AG04450 (cell line): ENCODE measurements at regions of chr16 and their contacts with region 1.

Region 1: DNA sequence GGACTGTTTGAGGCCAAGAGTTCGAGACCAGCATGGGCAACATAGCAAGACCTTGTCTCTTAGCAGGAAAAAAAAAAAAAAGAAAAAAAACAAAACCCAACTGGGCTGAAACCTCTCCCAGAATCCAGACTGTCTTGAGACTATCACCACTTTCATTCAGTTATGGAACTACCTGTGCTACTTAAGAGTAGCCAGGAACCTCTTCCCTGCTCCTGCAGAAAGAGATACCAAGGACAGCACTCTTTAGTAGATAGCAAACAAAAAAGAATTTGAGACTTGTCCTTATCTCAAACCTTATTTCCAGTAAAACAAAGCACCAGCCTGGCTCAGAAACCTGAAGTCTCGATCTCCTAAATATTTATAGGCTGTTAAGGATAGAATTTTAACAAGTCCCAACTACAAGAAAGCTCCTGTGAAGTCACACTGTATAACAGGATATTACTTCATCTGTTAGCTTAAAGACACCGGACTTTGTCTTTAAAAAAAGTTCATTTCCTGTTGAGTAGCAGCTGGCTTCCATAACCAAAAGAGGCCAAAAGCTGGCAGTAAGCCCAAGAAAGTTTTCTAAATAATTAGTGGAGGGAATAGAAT is 5.1 kb downstream of the CDR2 start:
- DNase-seq: peak; percentile 39
- H3K4me3 ChIP-seq: peak overlapping the region; percentile 4
- H3K27ac ChIP-seq: peak overlapping the region; percentile 83
- H3K27me3 ChIP-seq: no peaks in the 10 kb centered on the region
- CTCF ChIP-seq: no peak

Region 2: GRCh38 chr16:22353191-22353919 is 16.0 kb before region 1 on chr16:
- CTCF ChIA-PET with region 1: interaction called, 3 read pairs
- POLR2A ChIA-PET with region 1: interaction called, 16 read pairs
- DNase-seq: peak; percentile 71
- H3K4me3 ChIP-seq: no peak overlapping the region
- H3K27ac ChIP-seq: peak overlapping the region; percentile 95
- H3K27me3 ChIP-seq: no peaks in the 10 kb centered on the region
- CTCF ChIP-seq: no peak